Lower leg skin (tissue), 4 donors: ENCODE measurements at regions of chr1 and their contacts with region 1.

Region 1: DNA sequence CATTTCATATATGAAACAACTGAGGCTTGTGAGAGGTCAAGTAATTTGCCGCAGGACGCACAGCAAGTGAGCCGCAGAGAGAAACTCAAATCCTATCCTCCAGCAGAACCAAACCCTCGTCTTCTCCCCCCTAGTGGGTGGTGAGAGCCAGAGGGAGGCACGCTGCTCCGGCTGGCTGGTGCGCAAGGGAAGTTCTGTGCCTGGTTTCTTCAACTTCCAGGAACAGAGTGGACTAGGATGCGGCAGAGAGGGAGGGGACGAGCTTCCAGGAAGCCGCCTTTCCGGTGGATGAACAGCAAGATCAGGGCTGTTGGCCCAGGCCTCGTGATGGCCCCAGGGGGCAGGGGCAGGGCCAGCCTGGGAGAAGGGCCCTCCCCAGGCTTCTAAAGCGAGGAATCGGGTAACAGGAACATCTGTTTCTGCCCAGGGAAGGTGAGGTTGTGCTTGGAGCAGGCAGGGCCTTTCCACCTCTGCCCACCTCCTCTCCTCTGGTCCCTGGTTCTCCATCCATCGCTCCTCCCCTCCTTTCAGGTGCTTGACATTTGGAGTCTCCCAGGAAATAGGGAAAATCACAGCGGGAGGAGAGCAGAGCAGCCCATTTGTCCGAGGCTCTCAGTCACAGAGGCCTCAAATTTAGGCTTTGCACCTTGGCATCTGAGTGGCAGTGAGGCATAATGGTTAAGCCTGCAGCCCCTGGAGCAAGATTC is 16.8 kb upstream of the PDIK1L start:
- DNase-seq: peak; percentile 48 to 89
- H3K4me3 ChIP-seq: no peak overlapping the region
- CTCF ChIP-seq: no peak
- POLR2A ChIP-seq: no peak

Region 2: GRCh38 chr1:26035959-26036755 is 58.7 kb before region 1 on chr1:
- intact Hi-C with region 1: loop called (anchors 10 kb)
- DNase-seq: peak; percentile 65 to 96
- H3K4me3 ChIP-seq: peak overlapping the region; percentile 86
- CTCF ChIP-seq: peak in 1 of 3 donors; percentile 96
- POLR2A ChIP-seq: no peak